ENCODE measurements at regions of chr13 and their contacts with region 1.

Region 1: DNA sequence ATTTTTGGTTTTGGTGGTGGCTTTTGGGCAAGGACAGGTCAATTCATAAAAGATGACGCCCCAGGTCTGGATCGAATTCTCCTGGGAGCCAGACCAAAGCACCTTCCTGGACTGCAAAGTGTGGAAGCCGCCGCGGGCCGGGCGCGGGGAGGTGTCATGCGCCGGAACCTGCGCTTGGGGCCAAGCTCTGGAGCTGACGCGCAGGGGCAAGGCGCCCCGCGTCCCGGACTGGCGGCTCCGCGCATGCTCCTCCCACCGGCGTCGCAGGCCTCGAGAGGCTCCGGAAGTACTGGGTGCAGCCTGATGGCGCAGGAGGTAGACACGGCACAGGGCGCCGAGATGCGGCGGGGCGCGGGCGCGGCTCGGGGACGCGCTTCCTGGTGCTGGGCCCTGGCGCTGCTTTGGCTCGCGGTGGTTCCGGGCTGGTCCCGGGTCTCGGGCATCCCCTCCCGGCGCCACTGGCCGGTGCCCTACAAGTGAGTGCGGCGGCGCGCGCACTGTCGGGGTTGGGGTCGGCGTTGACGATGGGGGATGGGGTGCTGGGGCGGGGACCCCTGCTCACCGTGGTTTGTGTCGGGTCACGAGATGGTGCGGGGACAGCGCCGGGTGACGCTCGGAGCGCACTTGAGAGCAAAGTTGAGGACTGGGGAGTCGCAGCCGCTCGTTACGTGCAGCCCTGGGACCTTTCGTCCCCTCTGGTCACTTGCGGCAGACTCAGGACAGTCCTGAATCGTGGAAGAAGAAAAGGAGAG is at the start of gene CLN5:
- DNase-seq: peak; percentile 96 to 97
- H3K4me3 ChIP-seq: peak within 1 kb of the TSS; percentile 74
- H3K4me3 Mint-ChIP-seq: peak within 1 kb of the TSS; percentile 77
- H3K27ac Mint-ChIP-seq: peak within 1 kb of the TSS; percentile 76
- H3K4me1 ChIP-seq: peaks cover 10% of the 10 kb centered on the region
- H3K4me1 Mint-ChIP-seq: peaks cover 19% of the 10 kb centered on the region
- H3K27me3 ChIP-seq: no peaks in the 10 kb centered on the region
- H3K27me3 Mint-ChIP-seq: no peaks in the 10 kb centered on the region
- CTCF ChIP-seq: peak in 1 of 2 experiments; percentile 7
- total RNA-seq, gene CLN5: 15.4 and 20.1 TPM in 2 replicates

Region 2: GRCh38 chr13:76861859-76862258 is 130.1 kb before region 1 on chr13:
- CTCF ChIA-PET with region 1: no interaction called
- POLR2A ChIA-PET with region 1: no interaction called
- intact Hi-C with region 1: no loop called
- DNase-seq: no peak
- H3K4me3 ChIP-seq: no peak overlapping the region
- H3K4me3 Mint-ChIP-seq: no peak overlapping the region
- H3K27ac Mint-ChIP-seq: no peak overlapping the region
- H3K4me1 ChIP-seq: no peaks in the 10 kb centered on the region
- H3K4me1 Mint-ChIP-seq: no peaks in the 10 kb centered on the region
- H3K27me3 ChIP-seq: no peaks in the 10 kb centered on the region
- H3K27me3 Mint-ChIP-seq: peaks cover 18% of the 10 kb centered on the region
- CTCF ChIP-seq: no peak

Region 3: GRCh38 chr13:77026818-77027585 is 35.0 kb after region 1 on chr13 and contains the start of gene FBXL3:
- CTCF ChIA-PET with region 1: no interaction called
- POLR2A ChIA-PET with region 1: interaction called, 8 read pairs
- intact Hi-C with region 1: loop called (anchors 1 kb)
- DNase-seq: peak; percentile 86 to 87
- H3K4me3 ChIP-seq: peak within 1 kb of the TSS; percentile 98
- H3K4me3 Mint-ChIP-seq: peak within 1 kb of the TSS; percentile 87
- H3K27ac Mint-ChIP-seq: peak within 1 kb of the TSS; percentile 88
- H3K4me1 ChIP-seq: peaks cover 22% of the 10 kb centered on the region
- H3K4me1 Mint-ChIP-seq: peaks cover 20% of the 10 kb centered on the region
- H3K27me3 ChIP-seq: no peaks in the 10 kb centered on the region
- H3K27me3 Mint-ChIP-seq: peaks cover under 1% of the 10 kb centered on the region
- CTCF ChIP-seq: no peak
- total RNA-seq, gene FBXL3: 26.0 and 31.8 TPM in 2 replicates